ENCODE measurements at regions of chr21 and their contacts with region 1.

Region 1: GRCh38 chr21:32653311-32653901 is 41.2 kb upstream of the CFAP298 start:
- DNase-seq: no peak
- H3K4me3 ChIP-seq: no peak overlapping the region
- H3K27ac ChIP-seq: no peak overlapping the region
- H3K4me1 ChIP-seq: no peaks in the 10 kb centered on the region
- H3K27me3 ChIP-seq: no peaks in the 10 kb centered on the region
- CTCF ChIP-seq: peak in 2 of 3 donors; percentile 26 to 29
- POLR2A ChIP-seq: no peak

Region 2: DNA sequence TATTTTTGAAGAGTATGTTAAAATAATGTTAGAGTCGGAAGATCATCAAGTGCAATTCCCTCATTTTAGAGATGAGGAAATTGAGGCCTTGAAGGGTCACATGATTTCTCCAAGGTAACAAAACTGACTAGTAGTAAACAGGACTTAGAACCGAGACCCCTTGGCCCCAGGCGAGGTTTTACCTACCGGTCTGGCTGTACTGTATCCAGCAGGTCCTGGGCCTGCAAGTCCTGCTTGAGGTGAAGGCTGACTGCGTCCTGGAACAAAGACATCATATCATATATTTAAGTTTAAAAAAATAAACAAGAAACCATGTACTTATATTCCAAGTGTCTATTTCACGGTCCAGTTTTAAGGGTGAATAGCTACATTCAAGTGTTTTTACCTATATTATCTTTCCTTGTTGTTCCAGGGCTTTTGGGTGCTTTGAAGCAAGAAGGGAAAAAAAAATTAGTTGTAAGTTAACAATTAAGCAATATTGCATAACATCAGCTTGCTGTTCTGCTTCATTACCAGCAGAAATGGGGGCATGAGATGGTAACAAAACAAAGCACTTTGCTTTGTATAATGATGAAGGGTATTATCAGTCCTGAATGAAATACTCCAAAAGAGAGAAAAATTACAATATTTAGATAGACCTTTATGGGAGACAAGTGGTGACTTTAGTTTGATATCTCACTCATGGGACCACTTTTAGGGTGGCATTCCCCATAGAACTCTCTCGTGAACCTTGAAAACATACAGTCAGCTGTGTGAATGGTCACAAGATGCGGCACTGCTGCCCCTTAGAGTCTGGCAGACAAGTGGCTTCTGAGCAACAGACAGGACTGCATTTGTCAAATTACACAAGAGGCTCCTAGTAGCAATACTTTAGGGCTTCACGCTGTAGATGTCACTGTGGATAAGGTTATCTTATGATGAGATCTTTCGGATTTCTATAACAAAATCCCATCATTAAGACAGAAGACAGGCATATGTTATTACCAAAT is 11.4 kb before region 1 on chr21:
- intact Hi-C with region 1: loop called (anchors 1 kb)
- DNase-seq: no peak
- H3K4me3 ChIP-seq: no peak overlapping the region
- H3K27ac ChIP-seq: no peak overlapping the region
- H3K4me1 ChIP-seq: no peaks in the 10 kb centered on the region
- H3K27me3 ChIP-seq: no peaks in the 10 kb centered on the region
- CTCF ChIP-seq: no peak
- POLR2A ChIP-seq: no peak

Region 3: DNA sequence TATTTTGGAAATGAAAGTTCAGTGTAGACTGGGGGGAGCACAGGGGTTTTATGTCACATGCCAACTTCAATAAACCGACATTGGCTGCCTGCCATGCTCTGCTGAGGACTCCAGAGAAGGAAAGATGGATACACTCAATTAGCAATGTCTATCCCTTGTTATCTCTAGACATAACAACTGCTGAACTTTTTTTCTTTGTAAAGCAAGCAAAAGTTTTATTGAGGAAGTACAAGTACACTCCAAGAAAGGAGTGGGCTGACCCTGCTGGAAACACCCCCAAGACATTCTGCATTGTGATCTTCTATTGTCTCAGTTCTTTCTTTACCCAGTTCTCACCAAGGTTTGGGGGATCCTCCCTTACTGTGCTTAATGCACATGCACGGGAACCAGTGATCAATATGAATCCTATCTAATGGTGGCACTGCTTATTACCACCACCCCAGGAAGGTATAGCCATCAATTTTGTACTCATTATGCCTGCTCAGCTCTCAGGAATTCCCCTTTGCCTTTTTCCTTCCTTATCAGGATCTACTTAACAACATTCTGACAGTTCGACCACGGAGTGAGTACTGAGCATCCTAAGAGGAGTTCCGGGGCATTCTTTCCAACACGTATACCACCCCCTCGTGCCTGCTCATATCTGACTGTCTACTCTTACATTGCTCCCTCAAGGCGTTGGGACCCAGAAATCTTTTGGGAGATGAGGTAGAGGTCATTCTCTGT is 45.7 kb after region 1 on chr21:
- intact Hi-C with region 1: no loop called
- DNase-seq: no peak
- H3K4me3 ChIP-seq: no peak overlapping the region
- H3K27ac ChIP-seq: no peak overlapping the region
- H3K4me1 ChIP-seq: no peaks in the 10 kb centered on the region
- H3K27me3 ChIP-seq: no peaks in the 10 kb centered on the region
- CTCF ChIP-seq: no peak
- POLR2A ChIP-seq: no peak

Region 4: DNA sequence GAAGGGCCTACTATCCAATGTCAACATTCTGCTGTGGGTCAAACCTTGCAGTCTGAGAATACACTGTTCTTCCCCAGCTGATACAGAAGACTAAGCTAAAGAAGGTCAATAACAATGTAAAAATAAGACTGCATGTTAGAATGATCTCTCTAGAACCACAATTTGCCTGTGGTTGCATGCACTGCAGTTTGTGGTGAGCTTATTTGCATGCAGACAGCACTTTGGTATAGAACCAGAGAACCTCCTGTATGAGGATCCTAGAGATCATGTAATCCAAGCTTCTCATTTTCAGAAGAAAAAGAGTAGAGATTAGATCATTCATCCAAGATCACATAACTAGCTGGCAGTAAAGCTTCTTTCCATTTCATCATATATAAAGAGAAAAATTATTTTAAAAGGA is 58.6 kb after region 1 on chr21:
- intact Hi-C with region 1: no loop called
- DNase-seq: no peak
- H3K4me3 ChIP-seq: no peak overlapping the region
- H3K27ac ChIP-seq: no peak overlapping the region
- H3K4me1 ChIP-seq: no peaks in the 10 kb centered on the region
- H3K27me3 ChIP-seq: no peaks in the 10 kb centered on the region
- CTCF ChIP-seq: no peak
- POLR2A ChIP-seq: no peak